ENCODE measurements at regions of chr9 and their contacts with region 1.

Region 1: GRCh38 chr9:105341434-105342144 is 97.1 kb downstream of the SLC44A1 start:
- DNase-seq: no peak
- ATAC-seq: peak; percentile 39
- H3K4me3 Mint-ChIP-seq: no peak overlapping the region
- H3K27ac Mint-ChIP-seq: no peak overlapping the region
- H3K4me1 Mint-ChIP-seq: peaks cover 18% of the 10 kb centered on the region
- H3K27me3 Mint-ChIP-seq: no peaks in the 10 kb centered on the region
- CTCF ChIP-seq: no peak

Region 2: GRCh38 chr9:105385381-105385985 is 43.9 kb after region 1 on chr9:
- CTCF ChIA-PET with region 1: no interaction called
- POLR2A ChIA-PET with region 1: no interaction called
- intact Hi-C with region 1: loop called (anchors 5 kb)
- DNase-seq: peak; percentile 52
- ATAC-seq: peak; percentile 90
- H3K4me3 Mint-ChIP-seq: peak overlapping the region; percentile 76
- H3K27ac Mint-ChIP-seq: peak overlapping the region; percentile 68
- H3K4me1 Mint-ChIP-seq: peaks cover 12% of the 10 kb centered on the region
- H3K27me3 Mint-ChIP-seq: peaks cover 3% of the 10 kb centered on the region
- CTCF ChIP-seq: no peak

Region 3: GRCh38 chr9:105541838-105542237 is 200.2 kb after region 1 on chr9:
- CTCF ChIA-PET with region 1: no interaction called
- POLR2A ChIA-PET with region 1: no interaction called
- intact Hi-C with region 1: no loop called
- DNase-seq: no peak
- ATAC-seq: peak; percentile 98
- H3K4me3 Mint-ChIP-seq: no peak overlapping the region
- H3K27ac Mint-ChIP-seq: no peak overlapping the region
- H3K4me1 Mint-ChIP-seq: peaks cover 8% of the 10 kb centered on the region
- H3K27me3 Mint-ChIP-seq: no peaks in the 10 kb centered on the region
- CTCF ChIP-seq: no peak